Activated CD4-positive, alpha-beta memory T cell treated with anti-CD3 and anti-CD28 coated beads for 36 hours (primary cell): ENCODE measurements at regions of chr15 and their contacts with region 1.

Region 1: GRCh38 chr15:58770857-58771620 is at the start of gene MINDY2:
- DNase-seq: peak; percentile 97
- H3K4me3 Mint-ChIP-seq: no peak within 1 kb of the TSS
- H3K27ac Mint-ChIP-seq: peak within 1 kb of the TSS; percentile 73
- H3K4me1 Mint-ChIP-seq: peaks cover 9% of the 10 kb centered on the region
- H3K27me3 Mint-ChIP-seq: no peaks in the 10 kb centered on the region
- total RNA-seq, gene MINDY2: 8.0 to 11.6 TPM

Region 2: DNA sequence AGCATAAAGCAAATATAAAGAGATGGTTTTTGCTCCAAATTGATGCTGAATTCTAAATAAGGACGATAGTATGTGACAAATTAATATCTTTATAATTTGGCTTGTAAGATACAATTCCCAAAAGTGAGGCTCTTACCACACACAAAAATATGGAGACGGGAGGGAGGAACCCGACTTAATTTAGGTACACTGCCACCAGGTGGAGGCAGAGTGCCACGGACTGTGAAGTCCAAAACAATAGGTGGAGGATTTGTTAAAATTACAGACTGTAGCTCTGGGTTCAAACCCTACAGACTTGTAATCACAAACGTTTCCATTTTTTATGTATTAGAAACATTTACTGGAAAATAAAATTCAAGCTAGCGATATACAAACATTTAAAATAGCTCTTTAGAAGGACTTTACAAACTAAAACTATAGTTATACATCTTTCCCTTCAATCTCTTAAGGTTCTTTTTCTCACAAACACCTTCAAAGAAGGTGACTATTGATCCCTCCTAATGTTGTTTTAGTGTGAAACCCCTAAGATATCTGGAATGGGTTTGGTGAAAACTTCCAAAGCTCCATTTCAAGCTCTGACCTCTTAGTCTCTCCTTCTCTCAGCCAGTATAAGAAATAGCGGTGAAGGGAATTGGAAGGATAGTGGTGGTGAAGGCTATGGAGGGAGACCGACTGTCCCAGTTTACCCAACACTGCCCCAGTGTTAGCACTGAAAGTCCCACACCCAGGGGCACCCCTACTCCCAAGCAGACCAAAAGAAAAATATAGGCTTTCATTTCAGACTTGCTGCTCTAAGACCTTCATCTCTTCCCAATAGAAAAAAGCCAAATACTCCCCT is 543.1 kb before region 1 on chr15:
- CTCF ChIA-PET with region 1: interaction called, 16 read pairs
- POLR2A ChIA-PET with region 1: no interaction called
- intact Hi-C with region 1: no loop called
- DNase-seq: peak; percentile 77
- H3K4me3 Mint-ChIP-seq: no peak overlapping the region
- H3K27ac Mint-ChIP-seq: no peak overlapping the region
- H3K4me1 Mint-ChIP-seq: peaks cover 11% of the 10 kb centered on the region
- H3K27me3 Mint-ChIP-seq: peaks cover 17% of the 10 kb centered on the region

Region 3: DNA sequence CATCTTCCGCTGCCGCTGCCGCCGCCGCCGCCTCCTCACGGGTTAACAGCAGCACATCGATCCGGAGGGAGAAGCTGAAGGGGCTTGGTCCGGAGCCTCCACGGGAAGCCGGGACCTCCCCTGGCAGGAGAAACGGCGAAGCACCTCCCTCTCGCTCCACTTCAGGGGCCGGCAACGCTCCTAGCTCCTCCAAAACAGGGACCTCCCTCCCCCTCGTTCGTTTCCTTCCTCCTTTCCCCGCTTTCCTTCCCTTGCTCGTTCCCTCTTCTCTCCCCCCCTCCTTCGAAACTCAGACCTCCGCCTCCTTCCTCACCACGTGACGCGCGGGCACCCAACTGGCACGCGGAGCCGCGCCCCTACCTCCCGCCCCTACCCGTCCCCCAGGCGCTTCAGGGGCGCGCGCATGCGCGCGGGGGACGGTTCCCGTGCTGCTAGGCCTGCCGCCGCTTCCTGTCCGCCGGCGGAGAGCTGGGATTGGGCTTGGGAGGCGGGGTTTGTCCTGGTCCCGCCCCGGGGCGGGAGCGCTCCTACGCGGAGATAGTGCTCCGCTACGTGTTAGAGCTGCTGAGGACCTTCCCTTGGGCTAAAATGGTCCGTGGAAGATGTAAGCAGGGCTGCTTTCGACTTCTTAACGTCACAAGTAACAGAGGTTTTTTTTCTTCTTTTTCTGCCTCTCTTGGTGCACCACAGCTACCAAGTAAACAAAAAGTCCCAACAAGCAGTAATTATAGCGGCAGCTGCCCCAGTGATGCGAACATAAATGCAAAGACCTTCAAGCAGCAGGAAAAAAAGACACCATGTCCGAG is 21.3 kb before region 1 on chr15 and contains the start of gene ADAM10:
- CTCF ChIA-PET with region 1: interaction called, 32 read pairs
- POLR2A ChIA-PET with region 1: interaction called, 52 read pairs
- intact Hi-C with region 1: loop called (anchors 1 kb)
- DNase-seq: peak; percentile 99
- H3K4me3 Mint-ChIP-seq: peak within 1 kb of the TSS; percentile 92
- H3K27ac Mint-ChIP-seq: peak within 1 kb of the TSS; percentile 91
- H3K4me1 Mint-ChIP-seq: peaks cover 29% of the 10 kb centered on the region
- H3K27me3 Mint-ChIP-seq: no peaks in the 10 kb centered on the region
- total RNA-seq, gene ADAM10: 80.1 to 82.3 TPM

Region 4: GRCh38 chr15:58830556-58830955 is 59.5 kb after region 1 on chr15:
- CTCF ChIA-PET with region 1: no interaction called
- POLR2A ChIA-PET with region 1: no interaction called
- intact Hi-C with region 1: no loop called
- DNase-seq: no peak
- H3K4me3 Mint-ChIP-seq: no peak overlapping the region
- H3K27ac Mint-ChIP-seq: no peak overlapping the region
- H3K4me1 Mint-ChIP-seq: no peaks in the 10 kb centered on the region
- H3K27me3 Mint-ChIP-seq: no peaks in the 10 kb centered on the region